Testis (tissue), 5 donors: ENCODE measurements at regions of chr1 and their contacts with region 1.

Region 1: DNA sequence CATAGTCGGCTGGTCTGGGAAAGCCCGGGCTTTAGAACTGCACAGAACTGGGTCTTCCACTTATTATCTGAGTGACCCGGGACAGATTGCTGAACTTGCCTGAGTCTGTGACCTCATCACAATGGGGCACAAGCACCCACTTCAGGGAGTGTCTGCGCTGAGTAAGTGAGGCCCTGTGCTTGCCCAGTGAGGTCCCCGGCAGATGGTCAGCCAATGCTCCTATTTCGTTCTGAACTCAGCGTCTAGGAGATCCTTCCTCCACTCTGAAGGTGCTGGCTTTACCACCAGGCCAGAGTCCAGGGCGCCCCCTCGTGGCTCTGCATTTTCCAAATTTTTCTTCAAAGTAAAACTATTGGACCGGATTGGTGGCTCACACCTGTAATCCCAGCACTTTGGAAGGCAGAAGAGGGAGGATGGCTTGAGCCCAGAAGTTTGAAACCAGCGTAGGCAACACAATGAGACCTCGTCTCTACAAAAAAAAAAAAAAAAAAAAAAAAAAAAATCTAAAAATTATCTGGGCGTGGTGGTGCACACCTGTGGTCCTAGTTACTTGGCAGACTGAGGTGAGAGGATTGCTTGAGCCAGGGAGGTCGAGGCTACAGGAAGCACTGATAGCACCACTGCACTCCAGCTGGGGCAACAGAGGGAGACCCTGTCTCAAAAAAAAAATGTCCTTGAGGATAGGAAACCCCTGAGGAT is 61.7 kb downstream of the FCRL5 start:
- DNase-seq: peak; percentile 87
- H3K4me3 ChIP-seq: no peak overlapping the region
- H3K27ac ChIP-seq: no peak overlapping the region
- H3K4me1 ChIP-seq: no peaks in the 10 kb centered on the region
- H3K27me3 ChIP-seq: no peaks in the 10 kb centered on the region
- CTCF ChIP-seq: peak; percentile 49 to 64 (median 56)
- POLR2A ChIP-seq: no peak

Region 2: DNA sequence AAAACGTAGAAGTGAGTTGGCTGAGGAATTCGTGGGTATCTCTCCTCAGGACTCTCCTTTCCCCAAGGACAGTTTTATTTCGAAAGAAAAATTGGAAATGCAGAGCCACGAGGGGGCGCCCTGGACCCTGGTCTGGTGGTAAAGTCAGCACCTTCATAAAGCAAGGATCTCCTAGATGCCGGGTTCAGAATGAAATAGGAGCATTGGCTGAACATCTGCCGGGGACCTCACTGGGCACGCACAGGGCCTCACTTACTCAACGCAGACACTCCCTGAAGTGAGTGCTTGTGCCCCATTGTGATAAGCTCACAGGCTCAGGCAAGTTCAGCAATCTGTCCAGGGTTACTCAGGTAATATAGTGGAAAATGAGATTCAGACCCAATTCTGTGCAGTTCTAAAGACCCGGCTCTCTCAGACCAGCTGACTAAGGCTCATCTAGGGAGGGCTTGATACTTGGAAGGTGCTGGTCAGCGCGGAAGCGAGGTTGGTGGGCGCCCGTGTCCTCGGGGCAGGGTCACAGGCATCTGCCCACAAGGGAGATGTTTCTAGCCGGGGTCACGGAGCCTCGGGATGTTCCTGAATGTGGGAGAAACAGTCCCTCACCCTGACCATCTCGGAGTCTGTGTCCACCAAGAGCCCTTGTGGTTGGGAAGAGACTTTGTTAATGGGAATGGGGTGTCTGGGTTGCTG is 296.8 kb before region 1 on chr1:
- intact Hi-C with region 1: loop called (anchors 10 kb)
- DNase-seq: peak; percentile 88
- H3K4me3 ChIP-seq: no peak overlapping the region
- H3K27ac ChIP-seq: no peak overlapping the region
- H3K4me1 ChIP-seq: no peaks in the 10 kb centered on the region
- H3K27me3 ChIP-seq: no peaks in the 10 kb centered on the region
- CTCF ChIP-seq: peak; percentile 33 to 66 (median 41)
- POLR2A ChIP-seq: no peak

Region 3: DNA sequence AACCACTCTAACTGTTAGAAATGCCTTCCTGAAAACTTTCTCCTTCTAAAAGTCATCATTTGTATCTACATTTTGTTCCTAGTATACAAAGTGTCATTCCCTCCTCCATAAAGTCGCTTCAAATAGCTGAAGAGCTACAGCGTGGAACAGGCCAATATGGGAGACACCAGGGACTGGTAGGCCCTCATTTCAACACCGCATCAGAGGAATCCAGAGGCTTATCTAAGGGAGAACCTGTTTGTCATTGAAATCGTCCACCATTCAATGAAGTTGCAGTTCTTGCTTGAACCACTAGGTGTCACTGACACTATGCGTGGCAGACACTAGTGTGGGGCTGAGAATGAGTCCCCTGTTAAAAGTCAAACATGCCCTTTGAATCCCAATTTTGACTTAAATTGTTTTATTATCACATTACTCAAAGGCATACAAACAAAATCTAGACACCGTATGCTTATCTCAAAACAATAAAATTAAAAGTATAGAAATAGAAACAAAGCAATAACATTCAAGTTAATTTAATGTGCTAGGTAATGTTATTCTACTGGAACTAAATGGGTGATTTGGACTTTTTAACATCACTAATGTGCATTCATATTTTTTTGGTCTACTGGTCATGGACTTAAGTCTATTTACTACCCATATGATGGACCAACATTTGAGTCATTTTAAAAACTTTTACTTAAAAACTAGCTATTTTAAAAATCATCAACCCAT is 120.7 kb before region 1 on chr1:
- intact Hi-C with region 1: loop called (anchors 10 kb)
- DNase-seq: peak; percentile 71
- H3K4me3 ChIP-seq: no peak overlapping the region
- H3K27ac ChIP-seq: no peak overlapping the region
- H3K4me1 ChIP-seq: no peaks in the 10 kb centered on the region
- H3K27me3 ChIP-seq: no peaks in the 10 kb centered on the region
- CTCF ChIP-seq: peak; percentile 51 to 90 (median 81)
- POLR2A ChIP-seq: no peak